Activated CD8-positive, alpha-beta T cell treated with anti-CD3 and anti-CD28 coated beads for 36 hours (primary cell): ENCODE measurements at regions of chr1 and their contacts with region 1.

Region 1: GRCh38 chr1:55375617-55376258 is 160.6 kb upstream of the USP24 start:
- DNase-seq: peak; percentile 46
- ATAC-seq: peak; percentile 45
- H3K4me3 Mint-ChIP-seq: no peak overlapping the region
- H3K27ac Mint-ChIP-seq: no peak overlapping the region
- H3K4me1 Mint-ChIP-seq: no peaks in the 10 kb centered on the region
- H3K27me3 Mint-ChIP-seq: no peaks in the 10 kb centered on the region
- CTCF ChIP-seq: peak; percentile 95

Region 2: DNA sequence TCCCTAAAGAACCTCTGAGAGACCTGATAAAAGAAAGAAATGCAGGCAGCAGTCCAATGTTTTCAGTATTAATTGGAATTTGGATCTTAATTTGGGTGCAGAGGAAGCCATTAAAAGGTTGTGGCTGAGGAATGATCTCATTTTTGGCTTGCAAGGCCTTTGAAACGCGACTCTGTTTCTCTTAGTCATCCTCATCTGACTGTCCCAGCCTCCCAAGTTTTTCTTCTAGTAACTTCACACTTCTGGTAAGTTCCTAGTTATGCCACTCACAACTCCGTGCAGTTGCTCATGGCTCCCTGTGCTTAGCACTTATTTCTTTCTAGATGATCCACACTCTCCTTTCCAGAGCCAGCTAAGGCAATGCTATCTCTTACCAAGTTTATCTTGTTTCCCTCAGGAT is 13.2 kb before region 1 on chr1:
- CTCF ChIA-PET with region 1: interaction called, 23 read pairs
- POLR2A ChIA-PET with region 1: no interaction called
- intact Hi-C with region 1: no loop called
- DNase-seq: no peak
- ATAC-seq: no peak
- H3K4me3 Mint-ChIP-seq: no peak overlapping the region
- H3K27ac Mint-ChIP-seq: no peak overlapping the region
- H3K4me1 Mint-ChIP-seq: peaks cover 8% of the 10 kb centered on the region
- H3K27me3 Mint-ChIP-seq: peaks cover 1% of the 10 kb centered on the region
- CTCF ChIP-seq: no peak

Region 3: DNA sequence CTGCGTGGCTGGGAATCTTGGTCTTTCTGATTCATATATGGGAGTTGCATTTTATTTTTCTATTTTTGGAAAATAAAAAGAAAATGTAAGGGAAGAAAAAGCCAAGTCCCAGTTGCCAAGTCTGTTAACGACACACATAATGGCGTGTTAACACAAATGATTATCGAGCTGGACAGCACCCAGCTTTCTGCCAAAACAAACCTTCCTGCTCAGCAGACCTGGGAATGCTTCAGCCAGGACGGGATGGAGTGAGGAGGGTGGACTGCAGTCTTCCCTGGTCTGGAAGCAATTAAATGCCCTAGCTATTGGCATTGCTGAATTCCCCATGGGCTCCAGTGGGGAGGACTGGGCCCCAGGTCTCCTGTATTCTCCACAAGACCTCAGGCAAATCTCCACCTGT is 23.6 kb after region 1 on chr1:
- CTCF ChIA-PET with region 1: interaction called, 15 read pairs
- POLR2A ChIA-PET with region 1: no interaction called
- intact Hi-C with region 1: no loop called
- DNase-seq: no peak
- ATAC-seq: no peak
- H3K4me3 Mint-ChIP-seq: no peak overlapping the region
- H3K27ac Mint-ChIP-seq: no peak overlapping the region
- H3K4me1 Mint-ChIP-seq: no peaks in the 10 kb centered on the region
- H3K27me3 Mint-ChIP-seq: peaks cover 13% of the 10 kb centered on the region
- CTCF ChIP-seq: no peak

Region 4: DNA sequence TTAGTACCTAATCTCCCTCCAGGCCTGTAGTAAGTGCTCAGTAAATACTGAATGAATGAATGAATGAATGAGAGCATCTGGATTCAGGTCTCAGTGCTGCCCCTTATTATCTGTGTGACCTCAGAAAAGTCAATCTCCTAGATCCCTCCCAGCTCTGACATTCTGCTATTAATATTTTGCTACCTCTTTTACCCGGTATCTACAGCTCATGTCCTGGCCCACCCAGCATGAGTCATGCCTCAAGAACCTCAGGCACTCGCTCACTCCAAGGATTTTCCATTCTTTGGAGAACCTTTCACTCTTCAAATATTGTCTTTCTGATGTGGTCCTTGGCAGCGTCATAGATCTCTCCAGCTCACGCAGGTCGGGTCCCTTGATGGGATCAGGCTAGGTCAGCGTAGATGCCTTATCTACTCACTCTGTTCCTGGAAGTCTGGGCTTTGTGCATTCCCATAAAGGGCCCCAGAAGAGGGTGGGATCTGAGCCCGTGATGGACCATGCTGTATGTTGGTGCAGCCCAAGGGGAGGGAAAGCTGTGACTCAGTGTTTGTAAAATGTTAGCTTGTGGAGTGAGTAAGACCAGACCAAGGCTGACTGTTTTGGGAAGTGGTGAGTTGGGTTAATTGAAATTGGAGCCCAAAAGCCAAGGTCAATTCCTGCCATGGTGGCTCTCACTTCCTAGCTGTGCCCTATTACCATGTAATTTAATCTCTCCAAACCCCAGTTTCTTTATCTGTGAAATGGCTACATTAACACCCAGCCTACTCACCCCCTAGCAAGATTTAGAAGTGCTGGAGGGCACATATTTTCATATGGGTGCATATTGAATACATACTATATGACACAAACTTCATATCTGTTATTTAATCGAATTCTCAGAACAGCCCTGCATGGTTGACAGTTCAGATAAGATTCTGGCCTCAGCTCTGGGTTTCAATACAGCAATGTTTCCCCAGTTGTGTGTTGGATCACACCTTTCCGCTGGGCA is 53.5 kb after region 1 on chr1:
- CTCF ChIA-PET with region 1: no interaction called
- POLR2A ChIA-PET with region 1: no interaction called
- intact Hi-C with region 1: no loop called
- DNase-seq: no peak
- ATAC-seq: no peak
- H3K4me3 Mint-ChIP-seq: no peak overlapping the region
- H3K27ac Mint-ChIP-seq: no peak overlapping the region
- H3K4me1 Mint-ChIP-seq: no peaks in the 10 kb centered on the region
- H3K27me3 Mint-ChIP-seq: peaks cover 23% of the 10 kb centered on the region
- CTCF ChIP-seq: no peak